ENCODE measurements at regions of chrX and their contacts with region 1.

Region 1: GRCh38 chrX:41923257-41923969 is at the start of gene CASK:
- DNase-seq: peak; percentile 88
- H3K4me3 Mint-ChIP-seq: peak within 1 kb of the TSS; percentile 95
- H3K27ac Mint-ChIP-seq: peak within 1 kb of the TSS; percentile 90
- H3K4me1 Mint-ChIP-seq: peaks cover 33% of the 10 kb centered on the region
- H3K27me3 Mint-ChIP-seq: peaks cover 5% of the 10 kb centered on the region
- total RNA-seq, gene CASK: 17.4 and 30.5 TPM in 2 replicates

Region 2: DNA sequence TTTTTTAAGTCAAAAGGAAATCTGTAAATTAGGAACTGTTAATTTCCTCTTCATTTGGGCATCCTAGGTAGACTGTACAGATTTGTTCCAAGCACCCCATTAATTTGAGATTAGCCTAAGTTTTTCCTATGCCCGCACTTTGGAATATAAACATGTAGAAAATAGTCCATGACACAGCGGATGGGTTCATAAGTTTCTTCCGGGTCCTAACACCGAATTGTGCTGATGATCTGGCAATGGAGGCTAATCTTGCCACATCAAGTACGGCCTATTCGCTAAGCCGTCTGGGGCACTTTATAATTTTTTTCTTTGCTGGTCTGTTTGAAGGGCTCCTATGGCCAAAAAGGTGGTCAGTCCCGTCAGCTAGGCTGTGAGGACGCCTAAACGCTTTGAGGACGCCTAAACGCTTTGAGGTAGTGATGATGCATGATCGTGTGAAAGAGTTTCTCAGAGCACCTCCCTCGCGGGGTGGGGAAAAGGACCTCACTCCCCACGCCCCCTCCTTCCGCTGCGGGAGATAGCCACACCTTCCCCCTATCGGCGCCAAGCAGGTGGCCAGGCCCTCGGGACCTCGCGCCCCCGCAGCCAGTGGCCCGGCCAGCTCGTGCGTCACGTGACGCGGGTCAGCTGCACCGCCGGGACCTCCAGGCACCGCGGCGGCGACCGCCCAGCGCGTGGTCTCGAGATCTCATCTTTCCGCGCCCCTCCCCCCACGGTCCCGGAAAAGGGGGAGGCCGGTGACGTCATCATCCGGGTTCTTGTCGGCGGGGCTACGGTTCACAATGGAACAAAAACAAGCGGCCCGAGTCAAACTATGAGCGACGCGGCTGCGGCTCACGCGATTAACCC is 839.1 kb before region 1 on chrX:
- intact Hi-C with region 1: loop called (anchors 10 kb)
- DNase-seq: peak; percentile 85
- H3K4me3 Mint-ChIP-seq: peak overlapping the region; percentile 90
- H3K27ac Mint-ChIP-seq: peak overlapping the region; percentile 99
- H3K4me1 Mint-ChIP-seq: peaks cover 12% of the 10 kb centered on the region
- H3K27me3 Mint-ChIP-seq: no peaks in the 10 kb centered on the region

Region 3: GRCh38 chrX:41209853-41210252 is 713.6 kb before region 1 on chrX:
- intact Hi-C with region 1: no loop called
- DNase-seq: no peak
- H3K4me3 Mint-ChIP-seq: no peak overlapping the region
- H3K27ac Mint-ChIP-seq: no peak overlapping the region
- H3K4me1 Mint-ChIP-seq: no peaks in the 10 kb centered on the region
- H3K27me3 Mint-ChIP-seq: no peaks in the 10 kb centered on the region

Region 4: DNA sequence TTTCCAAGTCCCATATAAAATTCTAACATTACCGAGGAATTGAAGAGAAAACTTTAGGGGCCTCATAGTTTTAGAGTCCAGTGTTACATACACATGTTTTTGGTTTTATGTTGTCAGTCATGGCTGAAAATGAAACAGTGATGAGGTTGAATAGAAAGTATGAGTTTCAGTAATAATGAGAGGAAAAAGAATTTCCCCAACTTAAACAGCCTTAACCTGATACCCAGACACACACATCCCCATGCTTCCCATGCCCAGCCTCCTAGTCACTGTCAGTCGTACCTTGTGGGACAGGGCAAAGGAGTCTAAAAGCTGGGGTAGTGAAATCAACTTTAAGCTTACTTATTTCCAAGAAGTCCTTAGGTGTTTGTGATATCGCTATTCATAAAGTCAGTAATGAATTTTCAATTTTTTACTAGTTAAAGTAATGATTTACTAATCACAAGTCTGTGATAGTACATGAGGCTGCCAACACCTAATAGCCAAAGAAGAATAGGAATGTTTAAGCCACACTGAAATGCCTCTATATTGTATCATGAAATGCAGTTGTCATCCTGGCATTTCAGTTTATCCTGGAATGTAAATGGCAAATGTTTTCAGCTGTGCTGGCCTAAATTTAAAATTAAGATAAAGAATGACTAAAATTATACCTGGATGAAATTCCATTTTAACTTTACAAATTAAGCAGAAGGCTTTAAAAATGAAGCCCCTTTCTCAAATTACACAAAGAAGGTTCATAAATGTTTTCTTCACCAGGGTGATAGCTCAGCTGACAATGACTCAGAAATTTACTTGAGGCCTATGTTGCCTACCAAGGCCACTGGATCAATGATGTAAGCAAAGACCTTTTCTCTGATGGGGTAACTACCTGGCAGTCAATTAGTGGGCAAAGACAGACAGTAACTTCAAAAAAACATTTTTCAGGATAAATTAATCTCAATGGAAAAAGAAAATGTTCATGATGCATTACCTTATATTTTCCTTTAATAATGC is 258.8 kb before region 1 on chrX:
- intact Hi-C with region 1: loop called (anchors 1 kb)
- DNase-seq: no peak
- H3K4me3 Mint-ChIP-seq: peak overlapping the region; percentile 7
- H3K27ac Mint-ChIP-seq: peak overlapping the region; percentile 88
- H3K4me1 Mint-ChIP-seq: peaks cover 46% of the 10 kb centered on the region
- H3K27me3 Mint-ChIP-seq: no peaks in the 10 kb centered on the region

Region 5: GRCh38 chrX:41906515-41907165 is 16.8 kb before region 1 on chrX:
- intact Hi-C with region 1: loop called (anchors 2 kb)
- DNase-seq: no peak
- H3K4me3 Mint-ChIP-seq: no peak overlapping the region
- H3K27ac Mint-ChIP-seq: peak overlapping the region; percentile 12
- H3K4me1 Mint-ChIP-seq: peaks cover 34% of the 10 kb centered on the region
- H3K27me3 Mint-ChIP-seq: no peaks in the 10 kb centered on the region

Region 6: GRCh38 chrX:42128020-42128419 is 204.6 kb after region 1 on chrX:
- intact Hi-C with region 1: loop called (anchors 1 kb)
- DNase-seq: no peak
- H3K4me3 Mint-ChIP-seq: peak overlapping the region; percentile 4
- H3K27ac Mint-ChIP-seq: peak overlapping the region; percentile 72
- H3K4me1 Mint-ChIP-seq: peaks cover 68% of the 10 kb centered on the region
- H3K27me3 Mint-ChIP-seq: no peaks in the 10 kb centered on the region

Region 7: GRCh38 chrX:43654431-43655150 is 1731.2 kb after region 1 on chrX:
- intact Hi-C with region 1: loop called (anchors 2 kb)
- DNase-seq: peak; percentile 79
- H3K4me3 Mint-ChIP-seq: peak overlapping the region; percentile 85
- H3K27ac Mint-ChIP-seq: peak overlapping the region; percentile 96
- H3K4me1 Mint-ChIP-seq: peaks cover 5% of the 10 kb centered on the region
- H3K27me3 Mint-ChIP-seq: no peaks in the 10 kb centered on the region